Activated CD4-positive, alpha-beta T cell treated with anti-CD3 and anti-CD28 coated beads for 36 hours (primary cell): ENCODE measurements at regions of chr10 and their contacts with region 1.

Region 1: DNA sequence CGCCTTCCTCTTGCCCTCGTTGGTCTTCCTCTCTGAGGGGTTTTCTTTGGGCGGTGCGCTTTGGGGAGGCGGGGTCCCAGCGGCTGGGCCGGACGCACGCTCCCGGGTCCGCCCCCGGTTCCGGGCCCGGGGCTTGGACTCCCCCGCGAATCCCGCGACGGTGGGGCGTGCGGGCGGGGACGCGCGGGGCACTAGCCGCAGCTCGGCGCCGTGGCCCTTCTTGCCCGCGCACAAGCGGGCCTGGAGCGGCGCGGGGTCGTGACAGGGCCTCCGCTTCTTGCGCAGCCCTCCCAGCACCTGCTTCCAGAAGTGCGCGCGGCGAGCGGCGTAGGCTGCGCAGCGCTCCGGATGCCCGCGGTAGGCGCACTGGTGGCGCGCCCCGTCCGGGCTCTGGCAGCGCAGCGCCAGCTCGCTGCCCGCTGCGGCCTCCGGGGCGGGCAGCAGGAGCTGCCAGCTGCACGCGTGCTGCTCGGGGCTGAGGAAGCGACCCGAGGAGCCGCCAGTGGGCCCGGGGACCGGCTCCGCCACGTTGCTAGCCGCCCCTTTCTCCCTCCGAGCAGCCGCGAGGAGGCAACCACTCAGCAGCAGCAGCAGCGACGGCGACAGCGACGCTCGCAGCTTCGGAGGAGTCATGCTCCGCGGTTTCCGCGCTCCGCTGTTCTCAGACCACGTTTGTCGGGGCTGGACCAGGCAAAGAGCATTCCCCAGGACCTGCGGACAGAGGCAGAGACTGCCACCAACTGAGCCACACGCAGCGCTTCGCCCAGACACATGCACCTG is 759 bp downstream of the FGFBP3 start:
- DNase-seq: peak; percentile 87
- ATAC-seq: peak; percentile 90
- H3K4me3 Mint-ChIP-seq: peak overlapping the region; percentile 87
- H3K27ac Mint-ChIP-seq: peak overlapping the region; percentile 82
- H3K4me1 Mint-ChIP-seq: peaks cover 21% of the 10 kb centered on the region
- H3K27me3 Mint-ChIP-seq: peaks cover 5% of the 10 kb centered on the region

Region 2: DNA sequence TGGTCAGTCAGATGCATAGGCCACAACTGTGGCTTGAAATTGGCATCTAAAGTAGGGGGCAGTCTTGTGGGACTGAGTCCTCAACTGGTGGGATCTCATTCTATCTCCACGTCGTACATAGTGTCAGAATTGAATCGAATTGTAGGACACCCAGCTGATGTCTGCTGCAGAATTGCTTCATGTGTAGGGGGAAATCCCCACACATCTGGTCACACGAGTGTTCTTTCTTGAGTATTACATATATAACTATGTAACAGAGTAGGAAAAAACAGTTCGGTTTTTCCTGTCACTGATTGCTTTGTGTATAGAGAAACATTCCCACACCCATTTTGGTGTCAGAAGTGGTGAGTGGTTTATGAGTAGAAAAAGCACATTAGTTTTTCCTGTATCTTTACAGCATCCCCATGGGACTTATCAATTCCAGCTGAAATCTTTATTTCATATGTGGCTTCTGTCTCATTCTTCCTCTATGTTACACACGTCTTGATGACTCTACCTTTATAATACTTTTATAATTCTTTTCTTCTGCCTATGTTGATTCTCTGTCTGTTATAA is 767.5 kb before region 1 on chr10:
- CTCF ChIA-PET with region 1: no interaction called
- POLR2A ChIA-PET with region 1: no interaction called
- intact Hi-C with region 1: no loop called
- DNase-seq: no peak
- ATAC-seq: peak; percentile 44
- H3K4me3 Mint-ChIP-seq: no peak overlapping the region
- H3K27ac Mint-ChIP-seq: no peak overlapping the region
- H3K4me1 Mint-ChIP-seq: peaks cover 11% of the 10 kb centered on the region
- H3K27me3 Mint-ChIP-seq: peaks cover 5% of the 10 kb centered on the region

Region 3: GRCh38 chr10:91163269-91163868 is 745.2 kb before region 1 on chr10:
- CTCF ChIA-PET with region 1: no interaction called
- POLR2A ChIA-PET with region 1: no interaction called
- intact Hi-C with region 1: loop called in 1 of 2 experiments (anchors 10 kb)
- DNase-seq: peak; percentile 83
- ATAC-seq: peak; percentile 62
- H3K4me3 Mint-ChIP-seq: peak overlapping the region; percentile 81
- H3K27ac Mint-ChIP-seq: peak overlapping the region; percentile 91
- H3K4me1 Mint-ChIP-seq: peaks cover 34% of the 10 kb centered on the region
- H3K27me3 Mint-ChIP-seq: no peaks in the 10 kb centered on the region

Region 4: GRCh38 chr10:91389636-91390512 is 518.7 kb before region 1 on chr10:
- CTCF ChIA-PET with region 1: interaction called, 7 read pairs
- POLR2A ChIA-PET with region 1: no interaction called
- intact Hi-C with region 1: loop called (anchors 2 kb)
- DNase-seq: no peak
- ATAC-seq: peak; percentile 81
- H3K4me3 Mint-ChIP-seq: no peak overlapping the region
- H3K27ac Mint-ChIP-seq: no peak overlapping the region
- H3K4me1 Mint-ChIP-seq: peaks cover 6% of the 10 kb centered on the region
- H3K27me3 Mint-ChIP-seq: peaks cover 18% of the 10 kb centered on the region

Region 5: DNA sequence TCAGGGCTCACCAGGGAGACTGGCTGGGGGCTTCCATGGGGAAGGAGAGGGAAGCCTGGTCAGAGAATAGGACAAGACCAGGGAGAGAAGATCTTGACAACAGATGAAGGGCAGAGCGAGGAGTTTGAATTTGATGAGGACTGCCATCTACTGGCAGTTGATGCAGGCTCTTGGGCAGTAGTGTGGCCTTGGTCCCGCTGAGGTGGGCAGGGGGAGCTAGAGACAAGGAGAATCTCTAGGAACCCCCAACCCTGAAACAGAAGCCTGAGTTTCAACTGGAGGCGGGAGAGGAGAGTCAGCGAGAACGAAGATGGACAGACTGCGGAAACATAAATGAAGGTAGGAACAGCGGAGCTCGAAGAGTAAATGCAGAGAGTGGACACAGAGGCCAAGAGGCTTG is 356.7 kb before region 1 on chr10:
- CTCF ChIA-PET with region 1: no interaction called
- POLR2A ChIA-PET with region 1: no interaction called
- intact Hi-C with region 1: loop called in 1 of 2 experiments (anchors 2 kb)
- DNase-seq: peak; percentile 36
- ATAC-seq: no peak
- H3K4me3 Mint-ChIP-seq: no peak overlapping the region
- H3K27ac Mint-ChIP-seq: no peak overlapping the region
- H3K4me1 Mint-ChIP-seq: no peaks in the 10 kb centered on the region
- H3K27me3 Mint-ChIP-seq: peaks cover 6% of the 10 kb centered on the region

Region 6: DNA sequence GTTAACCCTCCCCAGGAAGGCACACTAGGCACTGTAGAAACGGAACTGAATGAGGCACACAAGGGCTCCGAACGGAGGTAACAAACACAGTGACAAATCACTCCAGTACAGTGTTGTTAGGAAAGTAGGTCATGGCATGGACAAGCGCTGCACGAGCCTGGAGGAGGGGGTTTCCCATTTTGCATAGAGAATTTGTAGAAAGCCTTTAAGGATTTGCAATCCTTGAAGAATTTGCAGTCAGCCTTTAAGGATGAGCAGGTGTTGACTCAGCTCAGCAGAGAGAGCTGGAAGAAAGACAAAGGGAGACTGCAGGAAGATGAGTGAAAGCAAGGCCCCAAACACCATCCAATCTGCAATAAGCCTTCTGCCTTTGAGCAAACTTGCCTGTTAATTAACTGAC is 224.6 kb before region 1 on chr10:
- CTCF ChIA-PET with region 1: no interaction called
- POLR2A ChIA-PET with region 1: no interaction called
- intact Hi-C with region 1: no loop called
- DNase-seq: no peak
- ATAC-seq: no peak
- H3K4me3 Mint-ChIP-seq: no peak overlapping the region
- H3K27ac Mint-ChIP-seq: no peak overlapping the region
- H3K4me1 Mint-ChIP-seq: no peaks in the 10 kb centered on the region
- H3K27me3 Mint-ChIP-seq: no peaks in the 10 kb centered on the region

Region 7: GRCh38 chr10:91758303-91759146 is 150.0 kb before region 1 on chr10:
- CTCF ChIA-PET with region 1: interaction called, 58 read pairs
- POLR2A ChIA-PET with region 1: no interaction called
- intact Hi-C with region 1: loop called (anchors 1 kb)
- DNase-seq: no peak
- ATAC-seq: peak; percentile 81
- H3K4me3 Mint-ChIP-seq: no peak overlapping the region
- H3K27ac Mint-ChIP-seq: no peak overlapping the region
- H3K4me1 Mint-ChIP-seq: peaks cover 3% of the 10 kb centered on the region
- H3K27me3 Mint-ChIP-seq: peaks cover 21% of the 10 kb centered on the region

Region 8: DNA sequence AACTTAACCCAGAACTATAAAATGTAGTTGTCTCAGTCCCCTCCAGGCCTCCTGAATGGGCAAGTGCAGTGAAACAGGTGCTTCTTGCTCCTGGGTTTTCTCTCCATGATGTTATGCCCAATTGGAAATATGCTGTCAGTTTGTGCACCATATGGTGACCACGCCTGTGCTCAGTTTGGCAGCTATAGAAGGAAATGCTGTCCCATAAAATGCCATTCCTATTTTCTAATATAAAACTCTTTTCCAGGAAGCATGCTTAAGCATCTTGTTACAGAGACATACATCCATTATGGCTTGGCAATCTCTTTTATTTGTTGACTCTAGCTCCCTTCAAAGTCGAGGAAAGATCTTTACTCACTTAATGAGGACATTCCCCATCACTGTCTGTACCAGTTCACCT is 44.4 kb before region 1 on chr10:
- CTCF ChIA-PET with region 1: interaction called, 8 read pairs
- POLR2A ChIA-PET with region 1: no interaction called
- intact Hi-C with region 1: loop called (anchors 1 to 2 kb)
- DNase-seq: no peak
- ATAC-seq: no peak
- H3K4me3 Mint-ChIP-seq: no peak overlapping the region
- H3K27ac Mint-ChIP-seq: no peak overlapping the region
- H3K4me1 Mint-ChIP-seq: peaks cover 5% of the 10 kb centered on the region
- H3K27me3 Mint-ChIP-seq: no peaks in the 10 kb centered on the region